Dorsolateral prefrontal cortex (tissue), 120 donors: ENCODE measurements at regions of chr2 and their contacts with region 1.

Region 1: GRCh38 chr2:157492189-157492773 is 48.4 kb upstream of the CYTIP start:
- DNase-seq: peak; percentile 31 to 81 (median 68)
- H3K4me3 ChIP-seq: no peak overlapping the region
- H3K27ac ChIP-seq: no peak overlapping the region
- H3K27me3 ChIP-seq: no peaks in the 10 kb centered on the region
- CTCF ChIP-seq: peak; percentile 49 to 92 (median 80)

Region 2: GRCh38 chr2:157302492-157303099 is 189.7 kb before region 1 on chr2:
- intact Hi-C with region 1: loop called in 1 of 2 experiments (anchors 5 kb)
- DNase-seq: peak in 1 of 10 donors; percentile 38
- H3K4me3 ChIP-seq: peak overlapping the region in 14 of 59 donors; percentile 8 to 52 (median 21)
- H3K27ac ChIP-seq: peak overlapping the region in 10 of 59 donors; percentile 14 to 80 (median 37)
- H3K27me3 ChIP-seq: peaks cover 0 to 8% (median 0%) of the 10 kb centered on the region in 45 donors
- CTCF ChIP-seq: peak; percentile 77 to 99 (median 90)

Region 3: DNA sequence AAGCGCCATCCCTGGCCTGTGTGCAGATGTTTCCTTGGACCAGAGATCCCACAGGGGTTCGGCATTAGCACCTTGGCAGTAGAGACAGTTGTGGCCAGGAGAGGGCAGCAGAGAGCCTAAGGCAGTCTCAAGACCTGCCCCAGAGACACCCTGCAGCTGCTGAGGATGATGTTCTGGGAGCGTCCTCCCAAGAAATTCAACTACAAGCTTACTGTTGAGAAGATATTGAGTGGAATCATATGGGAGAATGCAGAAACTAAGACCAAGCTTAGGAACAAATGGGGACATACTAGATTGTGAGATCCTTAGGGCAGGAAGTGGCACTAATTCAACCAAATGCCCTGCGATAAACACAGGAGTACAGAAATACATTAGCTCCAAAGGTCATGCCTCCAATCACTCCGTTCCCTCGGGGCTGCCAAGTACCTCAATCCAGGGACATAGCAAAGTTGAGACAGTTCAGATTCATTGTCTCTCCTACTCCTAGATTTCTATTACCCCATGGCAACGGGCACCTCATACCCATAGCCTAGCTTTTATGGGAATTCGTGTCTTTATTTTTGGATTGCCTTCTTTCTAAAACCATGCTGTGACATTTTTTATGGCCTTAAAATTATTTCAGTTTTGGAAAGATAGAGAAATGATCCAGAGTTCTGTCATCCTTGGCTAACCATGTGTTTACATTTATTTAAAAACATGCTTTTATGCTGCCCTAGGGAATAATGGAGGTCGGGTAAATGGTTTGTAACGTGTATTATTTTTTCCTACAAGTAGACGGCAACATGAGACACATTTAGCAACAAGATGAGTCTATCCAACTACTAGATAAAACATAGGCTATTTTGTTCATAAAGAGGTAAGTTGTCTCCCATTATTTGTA is 164.4 kb before region 1 on chr2:
- intact Hi-C with region 1: loop called in 1 of 2 experiments (anchors 10 kb)
- DNase-seq: peak; percentile 36 to 95 (median 86)
- H3K4me3 ChIP-seq: peak overlapping the region in 57 of 59 donors; percentile 1 to 79 (median 58)
- H3K27ac ChIP-seq: peak overlapping the region; percentile 55 to 99 (median 94)
- H3K27me3 ChIP-seq: no peaks in the 10 kb centered on the region
- CTCF ChIP-seq: peak; percentile 60 to 97 (median 90)

Region 4: GRCh38 chr2:157375384-157375783 is 116.9 kb before region 1 on chr2:
- intact Hi-C with region 1: no loop called
- DNase-seq: no peak
- H3K4me3 ChIP-seq: no peak overlapping the region
- H3K27ac ChIP-seq: no peak overlapping the region
- H3K27me3 ChIP-seq: no peaks in the 10 kb centered on the region
- CTCF ChIP-seq: no peak

Region 5: DNA sequence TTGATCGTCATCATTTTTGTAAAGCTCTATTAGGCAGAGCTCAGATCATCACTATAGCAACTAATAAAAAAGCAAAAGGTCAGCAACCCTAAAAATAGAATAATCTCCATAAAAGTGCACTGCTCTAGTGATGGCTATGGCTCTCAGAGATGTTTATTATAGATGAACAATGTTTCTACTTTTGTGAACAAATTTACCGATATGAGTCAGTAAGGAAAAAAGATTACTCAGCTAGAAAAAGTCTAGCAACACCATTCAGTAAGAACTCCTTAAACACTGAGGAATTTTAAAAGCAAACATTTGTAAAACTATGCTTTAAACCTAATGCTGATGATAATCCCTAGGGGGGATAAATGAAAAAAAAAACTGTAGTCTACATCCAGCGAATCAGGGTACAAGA is 66.8 kb after region 1 on chr2:
- intact Hi-C with region 1: no loop called
- DNase-seq: no peak
- H3K4me3 ChIP-seq: no peak overlapping the region
- H3K27ac ChIP-seq: no peak overlapping the region
- H3K27me3 ChIP-seq: no peaks in the 10 kb centered on the region
- CTCF ChIP-seq: no peak

Region 6: GRCh38 chr2:157628477-157629415 is 136.5 kb after region 1 on chr2 and contains the start of gene ACVR1C:
- intact Hi-C with region 1: loop called in 1 of 2 experiments (anchors 10 kb)
- DNase-seq: peak; percentile 25 to 83 (median 75)
- H3K4me3 ChIP-seq: peak within 1 kb of the TSS; percentile 49 to 91 (median 75)
- H3K27ac ChIP-seq: peak within 1 kb of the TSS in 58 of 59 donors; percentile 54 to 98 (median 92)
- H3K27me3 ChIP-seq: no peaks in the 10 kb centered on the region
- CTCF ChIP-seq: peak in 55 of 56 donors; percentile 47 to 83 (median 68)
- total RNA-seq, gene ACVR1C: 5.3 to 20.6 (median 11.5) TPM

Region 7: DNA sequence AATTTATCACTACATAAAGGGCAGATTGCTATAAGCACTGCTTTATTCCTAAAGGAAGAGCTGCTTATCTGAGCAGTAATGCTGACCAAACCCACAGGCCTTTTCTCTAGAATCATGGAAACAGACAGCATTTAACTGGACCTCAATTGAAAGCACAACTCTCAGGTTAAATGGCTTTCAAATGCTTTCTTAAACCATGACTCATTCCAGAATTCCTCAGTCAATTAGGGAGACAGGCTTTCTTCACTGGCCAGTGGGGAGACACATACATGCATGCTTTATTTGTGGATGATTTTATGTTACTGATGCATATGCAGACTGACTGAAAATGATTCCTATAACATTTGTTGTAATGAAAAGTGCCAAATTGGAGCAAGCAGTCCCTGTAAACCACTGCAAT is 269.2 kb after region 1 on chr2:
- intact Hi-C with region 1: loop called (anchors 10 kb)
- DNase-seq: no peak
- H3K4me3 ChIP-seq: no peak overlapping the region
- H3K27ac ChIP-seq: no peak overlapping the region
- H3K27me3 ChIP-seq: no peaks in the 10 kb centered on the region
- CTCF ChIP-seq: no peak